ENCODE measurements at regions of chrX and their contacts with region 1.

Region 1: GRCh38 chrX:150693775-150694574 is 779 bp downstream of the MTMR1 start:
- DNase-seq: peak; percentile 85
- H3K4me3 Mint-ChIP-seq: peak overlapping the region; percentile 90
- H3K27ac Mint-ChIP-seq: peak overlapping the region; percentile 97
- H3K4me1 Mint-ChIP-seq: peaks cover 64% of the 10 kb centered on the region
- H3K27me3 Mint-ChIP-seq: no peaks in the 10 kb centered on the region

Region 2: DNA sequence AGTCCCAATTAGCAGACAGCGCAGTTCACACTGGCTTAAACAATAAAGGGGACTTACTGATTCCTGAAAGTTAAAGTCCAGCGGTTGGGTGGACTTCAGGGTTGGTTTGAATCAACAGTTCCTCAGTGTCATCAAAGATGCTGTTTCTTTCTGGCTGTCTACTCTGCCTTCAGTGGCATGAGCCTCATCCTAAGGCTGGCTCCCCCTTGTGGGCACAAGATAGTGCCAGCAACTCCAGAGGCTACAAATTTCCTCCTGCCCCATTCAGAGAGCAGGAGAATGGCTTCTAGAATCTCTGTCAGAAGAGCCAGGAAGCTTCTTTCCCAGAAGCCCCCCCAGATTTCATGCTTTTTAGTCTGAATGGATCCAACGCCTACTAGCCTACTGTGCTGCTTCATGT is 208.0 kb before region 1 on chrX:
- CTCF ChIA-PET with region 1: no interaction called
- intact Hi-C with region 1: loop called (anchors 2 kb)
- DNase-seq: peak; percentile 62
- H3K4me3 Mint-ChIP-seq: no peak overlapping the region
- H3K27ac Mint-ChIP-seq: no peak overlapping the region
- H3K4me1 Mint-ChIP-seq: peaks cover 27% of the 10 kb centered on the region
- H3K27me3 Mint-ChIP-seq: no peaks in the 10 kb centered on the region

Region 3: GRCh38 chrX:150575416-150575808 is 118.6 kb before region 1 on chrX:
- CTCF ChIA-PET with region 1: interaction called, 3 read pairs
- intact Hi-C with region 1: loop called (anchors 1 kb)
- DNase-seq: peak; percentile 85
- H3K4me3 Mint-ChIP-seq: peak overlapping the region; percentile 62
- H3K27ac Mint-ChIP-seq: peak overlapping the region; percentile 97
- H3K4me1 Mint-ChIP-seq: peaks cover 76% of the 10 kb centered on the region
- H3K27me3 Mint-ChIP-seq: no peaks in the 10 kb centered on the region

Region 4: DNA sequence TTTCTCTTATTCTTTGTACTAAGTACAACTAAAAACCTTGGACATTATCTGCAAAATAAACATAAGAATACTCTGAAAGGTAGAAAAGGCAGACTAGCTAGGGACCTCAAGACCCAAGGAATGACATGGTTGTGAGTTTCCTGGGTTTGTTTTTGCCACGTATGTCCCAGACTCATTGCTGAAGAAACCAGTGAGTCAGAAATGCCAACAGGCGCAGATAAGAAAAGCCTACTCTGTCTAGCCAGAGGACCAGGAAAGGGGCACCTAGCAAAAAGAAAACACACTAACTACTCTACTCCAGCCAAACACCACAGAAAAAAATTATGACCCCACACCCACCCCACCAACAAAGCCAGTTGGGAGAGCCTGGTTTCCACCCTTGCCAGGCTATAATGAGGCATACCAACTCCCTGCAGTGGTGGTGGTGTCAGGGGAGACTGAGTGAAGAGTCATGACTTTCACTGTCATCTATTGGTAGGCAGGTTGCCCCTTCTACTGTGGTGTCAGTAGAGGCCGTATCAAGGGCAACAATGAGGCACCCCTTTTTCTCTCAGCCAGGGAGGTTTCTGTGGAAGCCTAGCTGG is 10.1 kb after region 1 on chrX:
- CTCF ChIA-PET with region 1: interaction called, 7 read pairs
- intact Hi-C with region 1: loop called (anchors 1 kb)
- DNase-seq: peak; percentile 55
- H3K4me3 Mint-ChIP-seq: no peak overlapping the region
- H3K27ac Mint-ChIP-seq: peak overlapping the region; percentile 89
- H3K4me1 Mint-ChIP-seq: peaks cover 51% of the 10 kb centered on the region
- H3K27me3 Mint-ChIP-seq: no peaks in the 10 kb centered on the region

Region 5: GRCh38 chrX:150898343-150899190 is 204.6 kb after region 1 on chrX and contains the start of gene CD99L2:
- CTCF ChIA-PET with region 1: no interaction called
- intact Hi-C with region 1: loop called (anchors 5 kb)
- DNase-seq: peak; percentile 88
- H3K4me3 Mint-ChIP-seq: peak within 1 kb of the TSS; percentile 75
- H3K27ac Mint-ChIP-seq: peak within 1 kb of the TSS; percentile 50
- H3K4me1 Mint-ChIP-seq: peaks cover 10% of the 10 kb centered on the region
- H3K27me3 Mint-ChIP-seq: no peaks in the 10 kb centered on the region
- total RNA-seq, gene CD99L2: 11.3 to 11.7 TPM